Activated naive CD4-positive, alpha-beta T cell treated with anti-CD3 and anti-CD28 coated beads, Interleukin-2, amount 10 ng/mL, durations not matched to agents 7 days and 5 days (primary cell): ENCODE measurements at regions of chr3 and their contacts with region 1.

Region 1: DNA sequence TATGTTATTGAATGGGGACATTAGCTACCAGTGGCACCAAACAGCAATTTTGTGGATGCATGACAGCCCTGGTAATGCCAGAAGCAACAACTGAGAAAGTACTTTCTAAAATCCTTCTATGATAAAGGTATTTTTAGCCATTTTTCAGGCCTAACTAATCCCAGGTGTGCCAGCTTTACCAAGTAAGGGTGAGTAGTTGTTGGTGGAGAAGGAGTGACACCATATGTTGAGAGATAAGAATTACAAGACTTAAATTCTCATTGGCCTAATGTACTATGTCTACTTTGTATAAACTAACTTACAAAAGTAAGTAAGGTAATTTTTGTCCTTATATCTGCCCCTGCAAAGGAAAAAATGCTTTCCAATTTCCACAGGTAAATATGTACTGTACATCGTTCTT is 4.1 kb upstream of the COX17 start:
- DNase-seq: no peak
- H3K4me3 Mint-ChIP-seq: no peak overlapping the region
- H3K27ac Mint-ChIP-seq: no peak overlapping the region
- H3K4me1 Mint-ChIP-seq: peaks cover 11% of the 10 kb centered on the region
- H3K27me3 Mint-ChIP-seq: no peaks in the 10 kb centered on the region

Region 2: GRCh38 chr3:119559441-119559963 is 121.8 kb before region 1 on chr3 and contains the start of gene CD80:
- CTCF ChIA-PET with region 1: interaction called, 10 read pairs
- DNase-seq: peak; percentile 84
- H3K4me3 Mint-ChIP-seq: peak within 1 kb of the TSS; percentile 70
- H3K27ac Mint-ChIP-seq: peak within 1 kb of the TSS; percentile 81
- H3K4me1 Mint-ChIP-seq: peaks cover 64% of the 10 kb centered on the region
- H3K27me3 Mint-ChIP-seq: peaks cover 6% of the 10 kb centered on the region

Region 3: GRCh38 chr3:119600732-119601131 is 80.5 kb before region 1 on chr3:
- CTCF ChIA-PET with region 1: interaction called, 25 read pairs
- DNase-seq: peak; percentile 31
- H3K4me3 Mint-ChIP-seq: no peak overlapping the region
- H3K27ac Mint-ChIP-seq: no peak overlapping the region
- H3K4me1 Mint-ChIP-seq: peaks cover 6% of the 10 kb centered on the region
- H3K27me3 Mint-ChIP-seq: peaks cover 25% of the 10 kb centered on the region